HCT116 (cell line): ENCODE measurements at regions of chr4 and their contacts with region 1.

Region 1: GRCh38 chr4:16001484-16001858 is 38.5 kb upstream of the FGFBP2 start:
- DNase-seq: peak; percentile 61
- ATAC-seq: peak; percentile 97
- H3K4me3 ChIP-seq: no peak overlapping the region
- H3K27ac ChIP-seq: no peak overlapping the region
- H3K4me1 ChIP-seq: peaks cover 0 to 5% of the 10 kb centered on the region in 2 experiments; a peak in 1 of 4 replicates
- H3K27me3 ChIP-seq: no peaks in the 10 kb centered on the region
- CTCF ChIP-seq: peak; percentile 75 to 91 (median 81)
- POLR2A ChIP-seq: no peak
- RAD21 ChIP-seq: peak; percentile 86

Region 2: DNA sequence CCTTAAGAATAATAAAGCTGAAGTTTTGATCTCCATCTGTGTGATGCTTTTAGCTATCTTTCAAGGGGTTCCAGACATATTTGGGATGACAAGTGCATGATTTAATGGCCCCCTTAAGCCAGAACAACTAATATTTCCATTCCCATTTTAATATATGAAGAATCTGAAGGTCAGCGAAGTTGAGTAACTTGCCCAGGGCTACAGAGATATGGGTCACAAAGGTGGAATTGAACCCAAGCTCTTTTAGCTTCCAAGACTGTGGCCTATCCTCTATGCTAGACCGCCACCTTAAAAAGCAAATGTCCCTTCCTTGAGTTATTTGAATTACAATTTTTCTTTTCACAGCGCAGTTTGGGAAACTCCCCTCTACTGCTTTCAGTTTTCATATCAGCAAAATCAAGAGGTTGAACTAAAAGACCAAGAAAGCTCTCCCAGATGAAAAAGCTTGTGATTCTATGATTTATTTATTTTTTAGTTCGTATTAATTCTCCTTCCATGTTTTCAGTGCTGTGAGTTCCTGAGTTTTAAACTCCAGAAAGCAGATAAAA is 748.2 kb before region 1 on chr4:
- CTCF ChIA-PET with region 1: no interaction called
- POLR2A ChIA-PET with region 1: no interaction called
- RAD21 ChIA-PET with region 1: no interaction called
- intact Hi-C with region 1: no loop called
- DNase-seq: no peak
- ATAC-seq: no peak
- H3K4me3 ChIP-seq: no peak overlapping the region
- H3K27ac ChIP-seq: no peak overlapping the region
- H3K4me1 ChIP-seq: no peaks in the 10 kb centered on the region
- H3K27me3 ChIP-seq: peaks cover 5% of the 10 kb centered on the region; the same call in 1 of the 2 replicates
- CTCF ChIP-seq: no peak
- POLR2A ChIP-seq: no peak
- RAD21 ChIP-seq: no peak

Region 3: GRCh38 chr4:15479089-15479912 is 522.2 kb before region 1 on chr4:
- CTCF ChIA-PET with region 1: interaction called, 3 read pairs
- POLR2A ChIA-PET with region 1: no interaction called
- RAD21 ChIA-PET with region 1: no interaction called
- intact Hi-C with region 1: loop called (anchors 1 kb)
- DNase-seq: peak; percentile 82
- ATAC-seq: peak; percentile 87
- H3K4me3 ChIP-seq: peak overlapping the region; percentile 62 to 68
- H3K27ac ChIP-seq: peak overlapping the region; percentile 56
- H3K4me1 ChIP-seq: peaks cover 5 to 11% of the 10 kb centered on the region in 2 experiments
- H3K27me3 ChIP-seq: no peaks in the 10 kb centered on the region
- CTCF ChIP-seq: peak; percentile 64 to 79 (median 74)
- POLR2A ChIP-seq: peak; percentile 70
- RAD21 ChIP-seq: peak; percentile 92

Region 4: GRCh38 chr4:15729910-15730533 is 271.4 kb before region 1 on chr4:
- CTCF ChIA-PET with region 1: no interaction called
- POLR2A ChIA-PET with region 1: no interaction called
- RAD21 ChIA-PET with region 1: no interaction called
- intact Hi-C with region 1: loop called (anchors 5 kb)
- DNase-seq: peak; percentile 19
- ATAC-seq: peak; percentile 84
- H3K4me3 ChIP-seq: no peak overlapping the region
- H3K27ac ChIP-seq: no peak overlapping the region
- H3K4me1 ChIP-seq: no peaks in the 10 kb centered on the region
- H3K27me3 ChIP-seq: no peaks in the 10 kb centered on the region
- CTCF ChIP-seq: peak; percentile 59 to 74 (median 68); a peak in 5 of 6 replicates
- POLR2A ChIP-seq: no peak
- RAD21 ChIP-seq: peak; percentile 68

Region 5: DNA sequence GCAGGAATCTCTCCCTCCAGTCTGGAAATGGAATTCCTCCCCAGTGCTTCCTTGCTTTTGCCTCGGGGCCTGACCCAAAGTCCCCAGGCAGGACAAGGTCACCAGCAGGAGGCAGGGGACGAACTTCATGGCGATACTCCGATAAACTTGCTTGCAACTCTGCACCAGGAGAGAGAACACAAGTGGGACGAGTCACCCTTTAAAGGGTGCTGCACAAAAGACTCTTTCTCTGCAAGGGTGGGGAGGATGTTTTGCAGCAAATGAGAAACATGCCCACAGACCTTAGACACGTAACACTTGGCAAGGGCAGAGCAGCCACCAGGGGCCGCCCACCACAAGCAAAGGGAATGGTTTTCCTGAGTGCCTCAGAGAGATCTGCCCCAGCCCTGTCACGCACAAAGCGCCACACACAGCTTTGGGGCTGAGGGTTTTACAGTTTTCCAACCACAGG is 38.4 kb before region 1 on chr4 and contains the start of gene FGFBP2:
- CTCF ChIA-PET with region 1: interaction called, 9 read pairs
- POLR2A ChIA-PET with region 1: no interaction called
- RAD21 ChIA-PET with region 1: no interaction called
- intact Hi-C with region 1: loop called (anchors 1 kb)
- DNase-seq: peak; percentile 21
- ATAC-seq: peak; percentile 91
- H3K4me3 ChIP-seq: no peak within 1 kb of the TSS
- H3K27ac ChIP-seq: no peak within 1 kb of the TSS
- H3K4me1 ChIP-seq: peaks cover 0 to 7% of the 10 kb centered on the region in 2 experiments; a peak in 1 of 4 replicates
- H3K27me3 ChIP-seq: no peaks in the 10 kb centered on the region
- CTCF ChIP-seq: peak; percentile 63 to 74 (median 69)
- POLR2A ChIP-seq: no peak
- RAD21 ChIP-seq: peak; percentile 75
- total RNA-seq, gene FGFBP2: not detected

Region 6: DNA sequence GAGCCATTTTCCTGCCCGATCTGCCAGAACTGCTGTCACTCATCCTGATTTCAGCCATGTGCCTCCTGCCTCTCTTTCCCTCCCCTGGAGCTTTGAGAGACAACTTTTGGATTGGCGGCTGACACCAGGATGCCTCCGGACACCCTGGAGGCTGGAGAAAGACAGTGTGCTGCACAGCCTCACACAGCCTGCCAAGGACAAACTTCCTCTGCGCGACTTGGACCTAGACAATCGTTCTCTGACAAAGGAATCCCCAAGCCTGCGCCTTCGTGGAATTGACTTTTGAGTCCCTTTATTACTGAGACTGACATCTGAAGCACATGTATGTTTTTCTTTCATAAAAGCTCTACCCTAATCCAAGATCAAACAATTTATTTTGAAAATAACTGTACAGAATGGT is 907.8 kb after region 1 on chr4:
- CTCF ChIA-PET with region 1: no interaction called
- POLR2A ChIA-PET with region 1: no interaction called
- RAD21 ChIA-PET with region 1: no interaction called
- intact Hi-C with region 1: no loop called
- DNase-seq: no peak
- ATAC-seq: no peak
- H3K4me3 ChIP-seq: no peak overlapping the region
- H3K27ac ChIP-seq: no peak overlapping the region
- H3K4me1 ChIP-seq: no peaks in the 10 kb centered on the region
- H3K27me3 ChIP-seq: peaks cover 19% of the 10 kb centered on the region
- CTCF ChIP-seq: no peak
- POLR2A ChIP-seq: no peak
- RAD21 ChIP-seq: no peak